A549 (cell line): ENCODE measurements at regions of chr11 and their contacts with region 1.

Region 1: DNA sequence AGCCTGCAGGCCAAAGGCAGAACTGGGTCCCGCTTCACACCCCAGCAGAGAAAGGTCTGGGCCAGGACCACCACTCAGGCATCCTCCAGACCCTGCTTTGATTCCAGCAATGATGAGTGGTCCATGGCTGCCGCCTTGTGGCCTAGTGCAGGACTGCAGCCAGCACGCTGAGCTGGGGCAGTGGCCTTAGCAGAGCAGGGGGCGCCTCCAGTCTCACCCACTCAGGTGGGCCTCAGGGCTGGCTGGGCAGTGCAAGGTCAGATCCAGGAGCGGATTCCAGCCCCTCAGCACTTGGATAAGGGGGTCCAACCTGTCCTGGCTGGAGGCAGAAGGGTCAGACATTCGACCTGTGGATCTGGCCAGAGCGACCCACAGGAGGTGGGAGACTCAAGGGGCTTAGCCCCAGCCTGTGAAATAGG is 9.6 kb upstream of the PDE2A start:
- DNase-seq: peak; percentile 42 to 85
- ATAC-seq: peak; percentile 57 to 85
- H3K4me3 ChIP-seq: no peak overlapping the region
- H3K27ac ChIP-seq: no peak overlapping the region
- H3K4me1 ChIP-seq: peaks cover 9% of the 10 kb centered on the region; the same call in 2 of the 3 replicates
- CTCF ChIP-seq: peak; percentile 83
- EP300 ChIP-seq: no peak
- POLR2A ChIP-seq: no peak
- RAD21 ChIP-seq: peak; percentile 82 to 87

Region 2: GRCh38 chr11:72483412-72484186 is 200.2 kb before region 1 on chr11:
- CTCF ChIA-PET with region 1: interaction called, 25 read pairs
- POLR2A ChIA-PET with region 1: no interaction called
- DNase-seq: peak in 1 of 2 experiments; percentile 10
- ATAC-seq: no peak
- H3K4me3 ChIP-seq: no peak overlapping the region
- H3K27ac ChIP-seq: no peak overlapping the region
- H3K4me1 ChIP-seq: 0 out of 3 replicates have a peak, but pooled peaks cover 2% of the 10 kb centered on the region
- CTCF ChIP-seq: no peak
- EP300 ChIP-seq: no peak
- POLR2A ChIP-seq: no peak
- RAD21 ChIP-seq: no peak

Region 3: GRCh38 chr11:72585762-72586311 is 98.0 kb before region 1 on chr11:
- CTCF ChIA-PET with region 1: interaction called, 293 read pairs
- POLR2A ChIA-PET with region 1: no interaction called
- DNase-seq: peak; percentile 64 to 77
- ATAC-seq: peak; percentile 27 to 75; a peak in 3 of 6 replicates
- H3K4me3 ChIP-seq: no peak overlapping the region
- H3K27ac ChIP-seq: no peak overlapping the region
- H3K4me1 ChIP-seq: 0 out of 3 replicates have a peak, but pooled peaks cover 6% of the 10 kb centered on the region
- CTCF ChIP-seq: peak; percentile 87
- EP300 ChIP-seq: no peak
- POLR2A ChIP-seq: no peak
- RAD21 ChIP-seq: peak; percentile 69 to 72

Region 4: DNA sequence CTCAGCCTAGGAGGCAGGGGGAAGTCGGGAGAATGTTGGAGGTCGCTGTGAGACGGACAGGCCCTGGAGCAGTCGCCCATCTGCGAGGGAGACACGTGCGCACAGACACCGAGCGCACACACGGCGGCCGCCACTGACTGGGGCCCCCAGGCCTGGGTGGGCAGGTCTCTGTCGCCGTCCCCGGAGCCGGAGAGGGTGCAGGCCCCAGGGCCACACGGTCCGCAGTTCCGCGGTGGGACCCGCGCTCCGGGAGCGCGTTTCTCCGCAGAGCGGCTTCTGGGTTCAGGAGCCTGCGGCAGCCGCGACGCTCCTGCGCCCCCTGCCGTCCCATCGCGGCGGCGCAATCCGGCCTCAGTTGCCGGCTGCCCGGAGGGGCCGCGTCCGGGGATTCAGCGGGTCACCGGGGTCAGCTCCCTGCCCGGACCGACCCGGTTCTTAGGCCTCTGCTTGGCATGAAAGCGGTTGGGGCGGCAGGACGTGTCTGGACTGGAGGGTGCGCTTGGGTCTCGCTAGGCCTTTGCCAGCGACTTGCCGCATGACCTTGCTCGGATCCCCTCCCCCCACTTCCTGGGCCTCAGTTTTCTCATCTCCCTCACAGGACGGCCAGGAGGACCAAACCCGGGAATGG is 40.8 kb before region 1 on chr11:
- CTCF ChIA-PET with region 1: interaction called, 16 read pairs
- POLR2A ChIA-PET with region 1: no interaction called
- DNase-seq: peak; percentile 65 to 80
- ATAC-seq: peak; percentile 59 to 86
- H3K4me3 ChIP-seq: peak overlapping the region; percentile 68
- H3K27ac ChIP-seq: peak overlapping the region; percentile 58 to 91
- H3K4me1 ChIP-seq: peaks cover 16% of the 10 kb centered on the region
- CTCF ChIP-seq: peak; percentile 96
- EP300 ChIP-seq: no peak
- POLR2A ChIP-seq: no peak
- RAD21 ChIP-seq: peak; percentile 64 to 88

Region 5: DNA sequence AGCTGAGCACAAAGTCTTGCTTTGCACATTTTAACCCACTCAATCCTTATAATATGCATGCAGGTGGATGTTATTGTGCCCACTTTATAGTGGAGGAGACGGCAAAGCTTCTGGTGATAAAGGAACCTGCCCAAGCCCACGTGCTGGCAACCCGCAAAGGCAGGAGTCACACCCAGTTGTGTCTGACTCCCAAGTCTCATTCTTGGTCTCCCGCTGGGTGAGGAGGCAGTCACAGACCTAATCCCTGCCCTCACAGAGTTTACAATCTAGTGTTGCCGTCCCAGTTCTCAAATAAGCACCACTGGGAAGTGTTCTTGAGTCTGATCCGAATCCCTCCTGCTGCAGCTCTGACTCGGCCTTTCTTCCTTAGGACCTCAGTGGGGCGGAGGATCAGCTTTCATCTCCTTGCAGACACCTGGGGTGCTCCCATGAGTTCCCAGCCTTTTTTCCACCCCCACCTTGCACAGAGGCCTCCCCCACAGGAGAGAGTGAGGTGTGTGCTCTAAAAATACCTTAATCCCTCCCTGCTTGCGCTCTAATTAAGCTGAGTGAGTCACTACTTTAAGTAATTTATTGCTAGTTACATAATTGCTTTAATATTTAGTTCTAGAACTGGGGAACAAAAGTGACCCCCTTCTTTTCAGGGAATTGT is 24.7 kb before region 1 on chr11:
- CTCF ChIA-PET with region 1: interaction called, 33 read pairs
- POLR2A ChIA-PET with region 1: no interaction called
- DNase-seq: no peak
- ATAC-seq: no peak
- H3K4me3 ChIP-seq: no peak overlapping the region
- H3K27ac ChIP-seq: no peak overlapping the region
- H3K4me1 ChIP-seq: no peaks in the 10 kb centered on the region
- CTCF ChIP-seq: no peak
- EP300 ChIP-seq: no peak
- POLR2A ChIP-seq: no peak
- RAD21 ChIP-seq: no peak

Region 6: GRCh38 chr11:72703267-72704008 is 19.6 kb after region 1 on chr11:
- CTCF ChIA-PET with region 1: interaction called, 40 read pairs
- POLR2A ChIA-PET with region 1: no interaction called
- DNase-seq: no peak
- ATAC-seq: peak in 1 of 2 experiments; percentile 24; a peak in 3 of 6 replicates
- H3K4me3 ChIP-seq: no peak overlapping the region
- H3K27ac ChIP-seq: no peak overlapping the region
- H3K4me1 ChIP-seq: peaks cover 7% of the 10 kb centered on the region; the same call in 2 of the 3 replicates
- CTCF ChIP-seq: no peak
- EP300 ChIP-seq: no peak
- POLR2A ChIP-seq: no peak
- RAD21 ChIP-seq: no peak

Region 7: GRCh38 chr11:72773716-72774115 is 89.9 kb after region 1 on chr11:
- CTCF ChIA-PET with region 1: no interaction called
- POLR2A ChIA-PET with region 1: no interaction called
- DNase-seq: no peak
- ATAC-seq: no peak
- H3K4me3 ChIP-seq: no peak overlapping the region
- H3K27ac ChIP-seq: no peak overlapping the region
- H3K4me1 ChIP-seq: peaks cover 17% of the 10 kb centered on the region
- CTCF ChIP-seq: no peak
- EP300 ChIP-seq: no peak
- POLR2A ChIP-seq: no peak
- RAD21 ChIP-seq: no peak